ENCODE measurements at regions of chr9 and their contacts with region 1.

Region 1: GRCh38 chr9:126326228-126327005 is at the start of gene MVB12B:
- DNase-seq: peak; percentile 47
- ATAC-seq: peak; percentile 43
- H3K4me3 Mint-ChIP-seq: peak within 1 kb of the TSS; percentile 86
- H3K27ac Mint-ChIP-seq: peak within 1 kb of the TSS; percentile 90
- H3K4me1 Mint-ChIP-seq: peaks cover 49% of the 10 kb centered on the region
- H3K27me3 Mint-ChIP-seq: no peaks in the 10 kb centered on the region
- total RNA-seq, gene MVB12B: 39.2 to 57.0 TPM

Region 2: DNA sequence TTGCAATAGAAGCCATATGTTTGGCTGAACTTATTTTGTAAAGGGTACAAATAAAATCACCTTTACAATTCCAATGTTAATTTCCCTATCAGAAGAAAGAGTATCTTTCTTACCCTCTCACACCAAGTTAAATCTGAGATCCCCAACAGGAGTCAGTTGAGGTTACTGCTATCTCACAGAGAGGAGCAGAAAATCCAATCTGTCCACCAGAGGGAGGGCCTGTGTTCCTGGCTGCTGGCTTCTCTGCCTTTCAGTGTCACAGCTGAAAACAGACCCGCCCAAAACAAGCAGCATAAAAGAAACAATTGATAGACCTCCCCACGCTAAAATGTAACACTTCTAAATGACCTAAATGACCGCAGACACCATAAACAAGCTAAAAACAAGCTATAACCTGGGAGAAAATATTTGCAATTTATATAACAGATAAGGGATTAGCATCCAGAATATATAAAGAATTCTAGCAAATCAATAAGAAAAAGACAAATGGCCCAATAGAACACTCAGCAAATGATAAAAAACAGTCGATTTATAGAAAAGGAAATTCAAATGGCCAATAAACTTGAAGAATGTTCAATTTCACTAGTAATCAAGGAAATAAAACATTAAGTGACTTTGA is 24.3 kb before region 1 on chr9:
- CTCF ChIA-PET with region 1: interaction called, 13 read pairs
- DNase-seq: peak; percentile 81
- ATAC-seq: peak; percentile 93
- H3K4me3 Mint-ChIP-seq: no peak overlapping the region
- H3K27ac Mint-ChIP-seq: peak overlapping the region; percentile 16
- H3K4me1 Mint-ChIP-seq: peaks cover 18% of the 10 kb centered on the region
- H3K27me3 Mint-ChIP-seq: peaks cover 4% of the 10 kb centered on the region

Region 3: GRCh38 chr9:126386088-126386487 is 59.7 kb after region 1 on chr9:
- CTCF ChIA-PET with region 1: interaction called, 11 read pairs
- DNase-seq: no peak
- ATAC-seq: peak; percentile 64
- H3K4me3 Mint-ChIP-seq: no peak overlapping the region
- H3K27ac Mint-ChIP-seq: no peak overlapping the region
- H3K4me1 Mint-ChIP-seq: peaks cover 60% of the 10 kb centered on the region
- H3K27me3 Mint-ChIP-seq: no peaks in the 10 kb centered on the region

Region 4: DNA sequence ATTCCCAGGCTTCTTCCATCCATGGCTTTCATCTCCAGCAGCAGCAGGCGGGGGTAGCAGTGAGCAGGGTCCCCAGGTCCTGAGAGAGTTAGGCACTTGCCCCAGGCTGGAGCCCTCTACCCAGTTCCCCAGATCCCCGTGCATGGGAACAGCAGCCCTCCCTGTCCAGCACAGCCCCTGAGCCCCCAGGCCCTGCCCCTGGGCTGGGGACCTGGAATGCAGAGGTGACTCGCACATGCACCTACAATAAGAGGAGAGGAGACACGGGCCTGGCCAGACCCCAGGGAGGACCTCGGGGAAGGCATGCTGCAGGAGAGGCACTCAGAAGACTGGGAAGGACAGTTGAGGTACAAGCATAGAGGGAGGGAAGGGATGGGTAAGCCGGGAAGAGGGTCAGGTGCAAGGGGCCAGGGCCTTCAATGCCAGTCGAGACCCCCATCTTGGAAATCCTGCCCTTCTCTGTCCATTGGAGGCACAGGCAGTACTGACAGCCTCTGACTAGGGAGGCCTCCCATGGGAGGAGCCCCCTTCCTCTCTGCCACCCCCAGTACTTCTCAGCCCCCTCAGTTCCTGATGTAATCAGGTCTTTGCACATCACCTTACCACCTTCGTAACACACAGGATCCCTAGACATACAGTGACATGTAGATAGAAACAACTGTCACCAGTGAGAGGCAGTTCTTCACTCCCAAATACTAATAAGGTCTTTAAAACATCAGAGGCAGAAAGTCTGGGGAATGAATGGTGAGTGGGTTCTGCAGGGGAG is 152.0 kb after region 1 on chr9:
- CTCF ChIA-PET with region 1: no interaction called
- DNase-seq: no peak
- ATAC-seq: no peak
- H3K4me3 Mint-ChIP-seq: no peak overlapping the region
- H3K27ac Mint-ChIP-seq: no peak overlapping the region
- H3K4me1 Mint-ChIP-seq: peaks cover 12% of the 10 kb centered on the region
- H3K27me3 Mint-ChIP-seq: no peaks in the 10 kb centered on the region

Measured in activated CD8-positive, alpha-beta memory T cell treated with anti-CD3 and anti-CD28 coated beads, Interleukin-2, amount 10 ng/mL, durations not matched to agents 7 days and 5 days (primary cell).